Ovary (tissue), 10 donors: ENCODE measurements at regions of chr1 and their contacts with region 1.

Region 1: DNA sequence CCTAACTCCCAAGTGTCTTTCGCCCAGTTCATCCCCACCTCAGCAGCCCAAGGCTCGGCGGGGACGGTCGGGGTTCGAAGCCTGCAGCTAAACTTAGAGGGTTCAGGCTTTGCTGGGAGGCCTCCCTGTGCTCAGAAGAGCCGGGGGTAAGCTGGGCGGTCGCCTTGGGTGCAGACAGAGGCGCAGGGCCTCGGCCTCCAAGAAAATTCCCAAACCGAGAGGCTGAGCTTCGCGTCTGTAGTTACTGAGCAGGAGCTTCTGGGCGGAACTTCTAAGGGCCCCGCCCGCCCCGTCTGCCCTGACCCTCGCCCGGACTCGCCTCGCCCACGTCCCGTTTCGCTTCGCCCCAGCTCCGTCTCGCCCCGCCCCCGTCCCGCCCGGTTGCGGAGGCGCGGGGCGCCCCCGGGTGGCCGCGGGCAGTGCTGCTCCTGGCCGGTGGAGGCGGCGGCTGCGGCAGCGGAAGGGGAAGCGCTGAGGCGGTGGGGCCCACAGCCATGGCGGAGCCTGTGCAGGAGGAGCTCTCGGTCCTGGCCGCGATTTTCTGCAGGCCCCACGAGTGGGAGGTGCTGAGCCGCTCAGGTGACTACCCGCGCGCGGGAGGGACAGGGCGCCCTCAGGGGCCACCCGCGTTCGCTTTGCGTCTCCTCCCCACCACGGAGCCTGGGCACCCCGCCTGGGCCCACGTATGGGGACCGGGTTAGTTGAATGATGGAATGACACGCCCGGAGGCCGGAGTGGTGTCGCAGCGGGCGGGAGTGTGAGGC is at the start of gene RWDD3:
- DNase-seq: peak; percentile 89 to 95 (median 92)
- H3K4me3 ChIP-seq: peak within 1 kb of the TSS; percentile 92
- H3K27ac ChIP-seq: peak within 1 kb of the TSS; percentile 67 to 75
- H3K4me1 ChIP-seq: peaks cover 1% of the 10 kb centered on the region
- H3K27me3 ChIP-seq: no peaks in the 10 kb centered on the region
- CTCF ChIP-seq: peak; percentile 72 to 95 (median 93)
- EP300 ChIP-seq: no peak
- POLR2A ChIP-seq: peak; percentile 49
- total RNA-seq, gene RWDD3: 9.7 to 18.0 (median 14.2) TPM

Region 2: DNA sequence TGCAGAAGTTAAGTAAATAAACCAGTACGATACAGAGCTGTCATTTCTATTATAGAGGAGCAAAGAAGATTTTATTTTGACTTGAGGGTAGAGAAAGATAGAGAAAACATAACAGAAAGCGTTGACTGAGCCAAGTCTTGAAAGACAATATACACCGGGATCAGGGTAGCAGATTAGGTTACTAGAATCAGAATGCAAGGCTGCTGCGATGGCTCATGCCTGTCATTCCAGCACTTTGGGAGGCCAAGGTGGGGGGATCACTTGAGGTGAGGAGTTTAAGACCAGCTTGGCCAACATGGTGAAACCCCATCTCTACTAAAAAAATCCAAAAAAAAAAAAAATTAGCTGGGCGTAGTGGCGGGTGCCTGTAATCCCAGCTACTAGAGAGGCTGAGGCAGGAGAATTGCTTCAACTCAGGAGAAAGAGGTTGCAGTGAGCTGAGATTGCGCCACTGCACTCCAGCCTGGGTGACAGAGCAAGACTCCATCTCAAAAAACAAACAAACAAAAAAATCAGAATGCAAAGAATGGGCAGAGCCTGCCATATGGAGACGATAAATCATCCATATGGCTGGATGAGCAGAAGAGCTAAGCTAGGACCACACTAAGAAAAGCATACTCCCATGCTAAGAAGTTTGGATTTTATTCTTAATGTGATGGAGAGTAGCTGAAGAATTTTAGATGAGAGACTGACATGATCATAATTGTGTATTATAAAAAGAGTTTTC is 825.7 kb before region 1 on chr1:
- intact Hi-C with region 1: loop called in 1 of 4 experiments (anchors 10 kb)
- DNase-seq: no peak
- H3K4me3 ChIP-seq: no peak overlapping the region
- H3K27ac ChIP-seq: no peak overlapping the region
- H3K4me1 ChIP-seq: no peaks in the 10 kb centered on the region
- H3K27me3 ChIP-seq: no peaks in the 10 kb centered on the region
- CTCF ChIP-seq: no peak
- EP300 ChIP-seq: no peak
- POLR2A ChIP-seq: no peak

Region 3: GRCh38 chr1:94854458-94855306 is 379.2 kb before region 1 on chr1:
- intact Hi-C with region 1: loop called in 1 of 4 experiments (anchors 10 kb)
- DNase-seq: peak; percentile 87 to 92 (median 90)
- H3K4me3 ChIP-seq: peak overlapping the region; percentile 40
- H3K27ac ChIP-seq: peak overlapping the region in 1 of 2 donors; percentile 50
- H3K4me1 ChIP-seq: peaks cover 6% of the 10 kb centered on the region
- H3K27me3 ChIP-seq: no peaks in the 10 kb centered on the region
- CTCF ChIP-seq: peak; percentile 87 to 98 (median 98)
- EP300 ChIP-seq: no peak
- POLR2A ChIP-seq: no peak

Region 4: DNA sequence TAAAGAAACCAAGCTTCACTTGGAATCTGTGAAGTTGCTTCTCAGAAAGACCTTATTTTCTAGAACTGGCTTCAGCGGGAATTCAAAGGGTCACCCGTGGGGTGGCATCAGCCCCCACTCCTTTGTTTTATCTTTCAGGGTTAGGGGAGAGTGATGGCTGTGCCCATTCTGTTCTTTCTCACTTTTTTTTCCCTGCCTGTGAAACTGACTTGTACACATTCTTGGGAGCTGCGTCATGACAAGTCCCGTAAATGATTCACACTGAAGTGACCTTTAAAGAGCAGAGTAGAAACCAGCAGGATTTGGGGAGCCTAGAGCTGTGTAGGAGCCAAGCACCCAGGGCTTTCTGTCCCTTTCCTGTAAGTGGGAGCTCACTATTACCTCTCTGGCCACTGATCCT is 370.0 kb before region 1 on chr1:
- intact Hi-C with region 1: loop called in 2 of 4 experiments (anchors 10 kb)
- DNase-seq: peak; percentile 46 to 83 (median 64)
- H3K4me3 ChIP-seq: peak overlapping the region; percentile 4
- H3K27ac ChIP-seq: peak overlapping the region; percentile 73 to 96
- H3K4me1 ChIP-seq: peaks cover 18% of the 10 kb centered on the region
- H3K27me3 ChIP-seq: no peaks in the 10 kb centered on the region
- CTCF ChIP-seq: peak in 1 of 3 donors; percentile 23
- EP300 ChIP-seq: peak; percentile 94
- POLR2A ChIP-seq: peak; percentile 36

Region 5: GRCh38 chr1:95072532-95073419 is 161.1 kb before region 1 on chr1 and contains the start of gene ALG14:
- intact Hi-C with region 1: loop called in 1 of 4 experiments (anchors 10 kb)
- DNase-seq: peak; percentile 93 to 95 (median 94)
- H3K4me3 ChIP-seq: peak within 1 kb of the TSS; percentile 67
- H3K27ac ChIP-seq: peak within 1 kb of the TSS; percentile 84 to 87
- H3K4me1 ChIP-seq: no peaks in the 10 kb centered on the region
- H3K27me3 ChIP-seq: no peaks in the 10 kb centered on the region
- CTCF ChIP-seq: no peak
- EP300 ChIP-seq: no peak
- POLR2A ChIP-seq: peak; percentile 75
- total RNA-seq, gene ALG14: 1.2 to 8.6 (median 3.6) TPM

Region 6: DNA sequence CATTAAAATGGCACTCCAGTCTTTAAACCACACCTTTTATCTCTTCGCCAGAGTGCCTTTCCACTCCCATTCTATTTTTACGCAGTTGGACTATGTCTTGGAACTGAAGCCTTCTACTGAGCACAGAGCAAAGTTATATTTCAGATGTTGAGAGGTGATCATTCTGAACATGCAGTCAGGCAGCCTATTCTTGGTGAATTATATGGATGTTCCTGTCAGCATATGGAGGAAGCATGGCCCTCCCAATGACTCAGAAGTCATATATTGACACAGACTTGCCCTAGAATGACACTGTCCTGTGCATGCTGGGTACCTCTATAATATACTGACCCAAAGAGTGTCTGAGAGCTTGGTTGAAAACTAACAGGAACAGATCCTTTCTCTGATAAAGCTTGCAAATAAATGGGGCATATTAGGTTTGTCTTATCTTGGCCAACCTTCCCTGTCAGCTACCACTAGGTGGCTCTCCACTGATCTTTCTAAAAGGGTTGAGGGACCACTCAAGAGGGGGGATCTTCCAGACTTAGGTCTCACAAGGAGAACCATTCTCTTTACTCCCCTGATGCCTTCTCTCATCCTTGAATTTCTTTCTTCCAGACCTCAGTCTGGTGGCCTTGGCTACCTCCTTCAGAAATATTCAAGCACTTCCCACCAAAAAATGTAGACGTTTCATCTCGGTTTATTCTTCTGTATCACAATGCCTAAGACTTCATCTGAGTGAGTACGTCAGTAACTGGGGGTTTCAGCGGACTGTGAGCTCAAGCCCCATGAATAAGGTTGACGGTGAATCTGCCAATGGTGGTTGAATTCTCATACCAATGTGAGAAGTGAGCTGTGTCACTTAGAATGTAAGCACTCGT is 149.4 kb before region 1 on chr1:
- intact Hi-C with region 1: loop called in 3 of 4 experiments (anchors 10 kb)
- DNase-seq: no peak
- H3K4me3 ChIP-seq: no peak overlapping the region
- H3K27ac ChIP-seq: no peak overlapping the region
- H3K4me1 ChIP-seq: peaks cover 2% of the 10 kb centered on the region
- H3K27me3 ChIP-seq: no peaks in the 10 kb centered on the region
- CTCF ChIP-seq: peak; percentile 13 to 32 (median 13)
- EP300 ChIP-seq: no peak
- POLR2A ChIP-seq: no peak

Region 7: DNA sequence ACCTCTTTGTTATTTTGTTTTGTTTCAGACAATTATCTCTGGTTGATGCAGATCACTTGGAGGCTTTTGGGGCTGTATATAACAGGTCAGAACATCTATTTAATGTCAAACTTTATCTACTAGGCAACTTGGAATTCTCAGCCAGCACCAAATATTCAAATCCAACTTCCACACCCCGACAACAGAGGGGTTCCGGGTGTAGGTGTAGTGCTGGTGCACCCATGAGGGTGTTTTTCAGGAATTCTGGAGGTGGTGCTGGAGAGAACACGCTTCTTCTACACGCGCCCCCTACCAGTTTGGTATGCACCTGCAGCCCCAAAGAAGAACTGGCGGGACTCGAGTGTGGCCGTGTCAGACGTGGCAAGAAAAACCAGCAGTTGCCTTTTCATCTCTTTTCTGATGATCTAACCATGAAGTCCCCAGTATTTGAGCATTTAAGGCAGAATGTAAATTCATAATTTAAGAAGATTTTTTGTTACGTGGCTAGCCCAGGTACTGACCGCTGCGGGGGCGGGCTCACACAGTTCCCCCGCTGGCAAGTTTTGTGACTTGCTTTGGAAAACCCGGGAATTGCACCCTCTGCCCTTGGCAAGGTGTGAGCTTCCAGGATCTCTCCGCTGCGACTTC is 117.2 kb before region 1 on chr1:
- intact Hi-C with region 1: loop called in 1 of 4 experiments (anchors 5 kb)
- DNase-seq: peak; percentile 35 to 60 (median 44)
- H3K4me3 ChIP-seq: peak overlapping the region; percentile 95
- H3K27ac ChIP-seq: peak overlapping the region; percentile 26 to 50
- H3K4me1 ChIP-seq: peaks cover 2% of the 10 kb centered on the region
- H3K27me3 ChIP-seq: no peaks in the 10 kb centered on the region
- CTCF ChIP-seq: peak in 2 of 3 donors; percentile 35 to 47
- EP300 ChIP-seq: no peak
- POLR2A ChIP-seq: no peak